CD4-positive, alpha-beta T cell (primary cell): ENCODE measurements at regions of chr5 and their contacts with region 1.

Region 1: GRCh38 chr5:77143998-77144836 is 57.1 kb upstream of the ZBED3 start:
- DNase-seq: peak; percentile 36 to 80 (median 53)
- ATAC-seq: peak; percentile 77
- H3K4me3 ChIP-seq: no peak overlapping the region
- H3K4me3 Mint-ChIP-seq: no peak overlapping the region
- H3K27ac ChIP-seq: no peak overlapping the region
- H3K27ac Mint-ChIP-seq: no peak overlapping the region
- H3K4me1 ChIP-seq: no peaks in the 10 kb centered on the region
- H3K4me1 Mint-ChIP-seq: no peaks in the 10 kb centered on the region
- H3K27me3 ChIP-seq: no peaks in the 10 kb centered on the region
- H3K27me3 Mint-ChIP-seq: no peaks in the 10 kb centered on the region
- CTCF ChIP-seq: peak; percentile 82

Region 2: GRCh38 chr5:77239126-77239741 is 95.0 kb after region 1 on chr5:
- CTCF ChIA-PET with region 1: no interaction called
- POLR2A ChIA-PET with region 1: no interaction called
- intact Hi-C with region 1: loop called (anchors 1 to 5 kb)
- DNase-seq: peak in 4 of 14 experiments; percentile 4 to 34 (median 24)
- ATAC-seq: peak; percentile 32
- H3K4me3 ChIP-seq: no peak overlapping the region
- H3K4me3 Mint-ChIP-seq: no peak overlapping the region
- H3K27ac ChIP-seq: no peak overlapping the region
- H3K27ac Mint-ChIP-seq: no peak overlapping the region
- H3K4me1 ChIP-seq: no peaks in the 10 kb centered on the region
- H3K4me1 Mint-ChIP-seq: no peaks in the 10 kb centered on the region
- H3K27me3 ChIP-seq: no peaks in the 10 kb centered on the region
- H3K27me3 Mint-ChIP-seq: peaks cover 14% of the 10 kb centered on the region
- CTCF ChIP-seq: peak; percentile 28

Region 3: GRCh38 chr5:77437194-77437593 is 293.0 kb after region 1 on chr5:
- CTCF ChIA-PET with region 1: no interaction called
- POLR2A ChIA-PET with region 1: no interaction called
- intact Hi-C with region 1: loop called in 1 of 2 experiments (anchors 5 kb)
- DNase-seq: peak in 3 of 14 experiments; percentile 13 to 24 (median 23)
- ATAC-seq: no peak
- H3K4me3 ChIP-seq: no peak overlapping the region
- H3K4me3 Mint-ChIP-seq: no peak overlapping the region
- H3K27ac ChIP-seq: no peak overlapping the region
- H3K27ac Mint-ChIP-seq: no peak overlapping the region
- H3K4me1 ChIP-seq: no peaks in the 10 kb centered on the region
- H3K4me1 Mint-ChIP-seq: no peaks in the 10 kb centered on the region
- H3K27me3 ChIP-seq: no peaks in the 10 kb centered on the region
- H3K27me3 Mint-ChIP-seq: no peaks in the 10 kb centered on the region
- CTCF ChIP-seq: no peak

Region 4: DNA sequence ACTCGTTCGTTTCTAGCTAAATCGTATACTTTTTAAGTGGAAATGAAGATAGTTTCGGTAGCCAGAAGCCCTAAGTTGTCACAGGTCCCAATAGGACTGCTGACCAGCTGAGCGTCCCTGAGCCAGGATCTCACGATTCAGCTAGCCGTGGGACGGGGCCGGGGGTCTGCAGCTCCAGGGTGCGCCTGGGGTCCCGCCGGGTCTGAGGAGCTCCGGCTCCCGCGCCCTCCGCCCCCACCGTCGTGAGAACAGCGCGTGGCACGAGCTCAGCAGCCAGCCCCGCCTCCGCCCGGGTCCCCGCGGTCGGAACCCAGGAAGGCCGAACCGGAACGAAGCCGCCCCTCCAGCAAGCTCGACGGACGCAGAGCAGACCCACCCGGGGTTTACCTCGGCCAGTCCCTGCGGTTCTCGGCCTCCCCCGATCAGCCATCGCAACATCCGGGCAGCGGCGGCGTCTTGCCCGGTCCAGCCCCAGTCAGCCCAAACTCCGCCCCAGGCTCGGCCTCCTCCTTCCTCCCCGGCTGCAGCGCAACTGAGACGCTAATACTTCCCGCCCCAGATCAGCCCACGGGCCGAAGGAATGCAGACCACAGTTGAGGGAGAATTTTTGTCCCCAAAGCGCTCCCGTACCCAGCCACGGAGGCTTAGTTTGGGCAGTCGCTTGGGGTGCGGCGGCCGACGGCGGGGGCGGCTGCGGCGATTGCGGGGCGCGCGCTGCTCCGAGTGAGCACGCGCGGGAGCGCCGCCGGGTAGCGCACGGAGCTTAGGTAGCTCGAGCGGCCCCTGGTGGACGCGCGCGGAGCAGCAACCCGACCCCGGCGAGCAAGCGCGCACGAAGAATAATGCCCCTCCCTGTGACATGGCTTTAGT is 347.8 kb after region 1 on chr5 and contains the start of gene WDR41:
- CTCF ChIA-PET with region 1: interaction called, 9 read pairs
- POLR2A ChIA-PET with region 1: interaction called, 9 read pairs
- intact Hi-C with region 1: loop called (anchors 1 to 2 kb)
- DNase-seq: peak; percentile 66 to 94 (median 82)
- ATAC-seq: peak; percentile 92
- H3K4me3 ChIP-seq: peak within 1 kb of the TSS; percentile 95
- H3K4me3 Mint-ChIP-seq: peak within 1 kb of the TSS; percentile 96
- H3K27ac ChIP-seq: peak within 1 kb of the TSS; percentile 70 to 72
- H3K27ac Mint-ChIP-seq: peak within 1 kb of the TSS; percentile 69
- H3K4me1 ChIP-seq: peaks cover 11% of the 10 kb centered on the region
- H3K4me1 Mint-ChIP-seq: peaks cover 24% of the 10 kb centered on the region
- H3K27me3 ChIP-seq: no peaks in the 10 kb centered on the region
- H3K27me3 Mint-ChIP-seq: peaks cover 33% of the 10 kb centered on the region
- CTCF ChIP-seq: peak; percentile 91
- total RNA-seq, gene WDR41: 4.2 to 4.4 TPM